ENCODE measurements at regions of chr2 and their contacts with region 1.

Region 1: GRCh38 chr2:166127217-166128155 is at the start of gene SCN1A:
- DNase-seq: no peak
- H3K4me3 Mint-ChIP-seq: no peak within 1 kb of the TSS
- H3K27ac Mint-ChIP-seq: no peak within 1 kb of the TSS
- H3K4me1 Mint-ChIP-seq: no peaks in the 10 kb centered on the region
- H3K27me3 Mint-ChIP-seq: peaks cover 10% of the 10 kb centered on the region
- total RNA-seq, gene SCN1A: not detected in 2 replicates

Region 2: GRCh38 chr2:164992818-164993217 is 1134.7 kb before region 1 on chr2:
- intact Hi-C with region 1: loop called (anchors 2 kb)
- DNase-seq: peak; percentile 82
- H3K4me3 Mint-ChIP-seq: no peak overlapping the region
- H3K27ac Mint-ChIP-seq: no peak overlapping the region
- H3K4me1 Mint-ChIP-seq: peaks cover 30% of the 10 kb centered on the region
- H3K27me3 Mint-ChIP-seq: peaks cover 2% of the 10 kb centered on the region

Region 3: GRCh38 chr2:165401285-165401852 is 726.1 kb before region 1 on chr2:
- intact Hi-C with region 1: loop called (anchors 5 kb)
- DNase-seq: peak; percentile 72
- H3K4me3 Mint-ChIP-seq: no peak overlapping the region
- H3K27ac Mint-ChIP-seq: no peak overlapping the region
- H3K4me1 Mint-ChIP-seq: peaks cover 5% of the 10 kb centered on the region
- H3K27me3 Mint-ChIP-seq: peaks cover 18% of the 10 kb centered on the region

Region 4: DNA sequence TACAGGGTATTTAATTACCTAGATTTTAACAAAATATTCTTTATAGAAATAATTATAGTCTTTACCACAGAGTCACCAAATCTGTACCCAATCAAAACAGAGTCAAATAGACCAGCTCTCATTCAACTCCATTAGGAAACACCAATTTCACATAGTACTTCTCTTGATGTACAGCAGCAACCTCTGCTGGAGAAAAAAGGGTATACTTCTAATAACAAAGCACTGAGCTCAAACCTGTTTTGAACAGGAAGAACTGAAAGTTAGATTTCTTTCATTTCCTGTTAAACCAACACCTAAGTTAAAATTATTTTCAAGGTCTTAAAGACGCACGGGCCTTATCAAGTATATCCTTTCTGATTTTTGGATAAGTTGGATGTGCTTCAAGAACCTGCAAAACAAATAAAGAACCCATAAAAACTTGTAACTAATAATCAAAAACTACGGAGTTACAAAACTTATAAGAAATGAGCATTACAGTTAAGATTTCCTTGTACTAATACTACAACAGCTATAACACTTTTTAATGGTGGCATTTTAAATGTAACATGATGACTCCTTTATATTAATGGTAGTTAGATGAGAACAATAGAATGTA is 252.9 kb before region 1 on chr2:
- intact Hi-C with region 1: loop called (anchors 10 kb)
- DNase-seq: peak; percentile 76
- H3K4me3 Mint-ChIP-seq: no peak overlapping the region
- H3K27ac Mint-ChIP-seq: no peak overlapping the region
- H3K4me1 Mint-ChIP-seq: peaks cover 18% of the 10 kb centered on the region
- H3K27me3 Mint-ChIP-seq: no peaks in the 10 kb centered on the region

Region 5: GRCh38 chr2:165953655-165954606 is 173.6 kb before region 1 on chr2 and contains the start of gene TTC21B:
- intact Hi-C with region 1: loop called (anchors 1 kb)
- DNase-seq: peak; percentile 98
- H3K4me3 Mint-ChIP-seq: peak within 1 kb of the TSS; percentile 50
- H3K27ac Mint-ChIP-seq: no peak within 1 kb of the TSS
- H3K4me1 Mint-ChIP-seq: peaks cover 5% of the 10 kb centered on the region
- H3K27me3 Mint-ChIP-seq: no peaks in the 10 kb centered on the region
- total RNA-seq, gene TTC21B: 21.4 and 22.7 TPM in 2 replicates

Region 6: GRCh38 chr2:166057370-166058164 is 69.9 kb before region 1 on chr2:
- intact Hi-C with region 1: loop called (anchors 2 kb)
- DNase-seq: no peak
- H3K4me3 Mint-ChIP-seq: no peak overlapping the region
- H3K27ac Mint-ChIP-seq: no peak overlapping the region
- H3K4me1 Mint-ChIP-seq: no peaks in the 10 kb centered on the region
- H3K27me3 Mint-ChIP-seq: no peaks in the 10 kb centered on the region

Measured in activated CD4-positive, alpha-beta T cell treated with anti-CD3 and anti-CD28 coated beads, Interleukin-2, amount 10 ng/mL, durations not matched to agents 24 days and 14 days (primary cell).